Right ventricle myocardium superior (tissue), 1 donor: ENCODE measurements at regions of chr16 and their contacts with region 1.

Region 1: GRCh38 chr16:7025616-7026190 is 306.9 kb upstream of the RBFOX1 start:
- DNase-seq: peak; percentile 75
- ATAC-seq: peak; percentile 77

Region 2: DNA sequence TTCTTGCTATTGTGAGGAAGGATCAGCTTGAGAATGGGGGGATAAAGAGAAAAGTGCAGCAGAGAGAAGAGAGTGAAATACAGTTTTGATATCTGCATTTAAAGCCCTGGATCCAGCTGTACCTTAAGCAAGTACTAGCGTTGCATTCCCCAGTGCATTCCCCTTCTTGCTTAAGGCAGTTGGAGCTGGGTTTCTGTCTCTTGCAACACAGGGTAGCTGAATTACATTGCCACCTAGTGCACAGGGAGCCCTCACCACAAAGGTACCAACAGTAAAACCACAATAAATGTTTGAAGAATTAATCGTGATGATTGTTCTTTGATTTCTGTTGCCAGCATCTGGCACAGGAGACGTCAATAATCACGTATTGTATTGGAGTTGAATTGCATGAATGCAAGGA is 895.6 kb after region 1 on chr16:
- intact Hi-C with region 1: loop called (anchors 10 kb)
- DNase-seq: no peak
- ATAC-seq: no peak

Region 3: GRCh38 chr16:8173111-8173644 is 1147.5 kb after region 1 on chr16:
- intact Hi-C with region 1: loop called (anchors 5 kb)
- DNase-seq: peak; percentile 54
- ATAC-seq: peak; percentile 63

Region 4: DNA sequence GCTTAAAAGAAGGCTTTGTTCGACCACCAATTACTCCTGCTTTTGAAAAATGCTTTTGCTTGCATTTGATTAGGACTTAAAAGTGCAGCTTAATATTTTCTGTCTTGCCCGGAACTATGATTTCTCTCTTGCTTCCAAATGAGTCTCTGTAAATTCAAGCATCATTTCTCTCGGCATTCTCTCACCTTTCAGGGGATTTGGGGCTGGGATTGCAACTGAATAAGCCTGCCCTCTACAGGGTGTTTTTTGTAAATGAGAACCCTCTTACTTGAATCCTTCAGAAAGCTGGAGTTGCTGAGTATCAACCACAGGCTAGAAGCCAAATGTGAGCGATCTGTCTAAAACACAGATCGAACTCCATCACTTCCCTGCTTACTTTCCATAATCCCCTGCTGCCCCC is 1330.0 kb after region 1 on chr16:
- intact Hi-C with region 1: loop called (anchors 10 kb)
- DNase-seq: no peak
- ATAC-seq: no peak